CD14-positive monocyte (primary cell): ENCODE measurements at regions of chr9 and their contacts with region 1.

Region 1: GRCh38 chr9:29668732-29669131 is 2095.5 kb upstream of the C9orf72 start:
- DNase-seq: no peak
- H3K4me3 ChIP-seq: no peak overlapping the region
- H3K4me3 Mint-ChIP-seq: no peak overlapping the region
- H3K27ac ChIP-seq: no peak overlapping the region
- H3K27ac Mint-ChIP-seq: no peak overlapping the region
- H3K4me1 ChIP-seq: no peaks in the 10 kb centered on the region
- H3K4me1 Mint-ChIP-seq: no peaks in the 10 kb centered on the region
- H3K27me3 ChIP-seq: no peaks in the 10 kb centered on the region
- H3K27me3 Mint-ChIP-seq: peaks cover 0 to 1% (median 0%) of the 10 kb centered on the region in 3 donors
- CTCF ChIP-seq: no peak

Region 2: DNA sequence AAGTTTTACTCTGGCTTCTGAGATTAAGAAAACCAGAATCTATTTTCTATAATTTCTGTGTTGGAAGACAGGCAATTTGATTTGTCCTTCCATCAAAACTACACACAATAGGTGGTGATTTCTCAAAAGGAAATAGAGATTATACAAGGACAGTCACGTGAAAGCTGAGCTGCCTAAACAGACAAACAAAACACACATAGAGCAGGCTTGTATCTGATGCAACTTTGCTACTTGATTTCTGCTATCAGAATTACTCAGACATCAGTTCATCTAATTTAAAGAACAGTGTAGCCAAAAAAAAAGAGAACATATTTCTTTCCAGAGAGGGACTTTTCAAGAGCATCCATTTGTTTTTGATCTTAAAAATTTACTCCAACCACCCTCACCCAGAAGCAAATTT is 32.8 kb after region 1 on chr9:
- intact Hi-C with region 1: no loop called
- DNase-seq: no peak
- H3K4me3 ChIP-seq: no peak overlapping the region
- H3K4me3 Mint-ChIP-seq: no peak overlapping the region
- H3K27ac ChIP-seq: no peak overlapping the region
- H3K27ac Mint-ChIP-seq: no peak overlapping the region
- H3K4me1 ChIP-seq: no peaks in the 10 kb centered on the region
- H3K4me1 Mint-ChIP-seq: no peaks in the 10 kb centered on the region
- H3K27me3 ChIP-seq: no peaks in the 10 kb centered on the region
- H3K27me3 Mint-ChIP-seq: no peaks in the 10 kb centered on the region
- CTCF ChIP-seq: no peak

Region 3: GRCh38 chr9:29717631-29718030 is 48.9 kb after region 1 on chr9:
- intact Hi-C with region 1: loop called in 1 of 2 experiments (anchors 10 kb)
- DNase-seq: no peak
- H3K4me3 ChIP-seq: no peak overlapping the region
- H3K4me3 Mint-ChIP-seq: no peak overlapping the region
- H3K27ac ChIP-seq: no peak overlapping the region
- H3K27ac Mint-ChIP-seq: no peak overlapping the region
- H3K4me1 ChIP-seq: no peaks in the 10 kb centered on the region
- H3K4me1 Mint-ChIP-seq: no peaks in the 10 kb centered on the region
- H3K27me3 ChIP-seq: no peaks in the 10 kb centered on the region
- H3K27me3 Mint-ChIP-seq: no peaks in the 10 kb centered on the region
- CTCF ChIP-seq: no peak

Region 4: GRCh38 chr9:29730163-29730562 is 61.4 kb after region 1 on chr9:
- intact Hi-C with region 1: loop called in 1 of 2 experiments (anchors 10 kb)
- DNase-seq: no peak
- H3K4me3 ChIP-seq: no peak overlapping the region
- H3K4me3 Mint-ChIP-seq: no peak overlapping the region
- H3K27ac ChIP-seq: no peak overlapping the region
- H3K27ac Mint-ChIP-seq: no peak overlapping the region
- H3K4me1 ChIP-seq: no peaks in the 10 kb centered on the region
- H3K4me1 Mint-ChIP-seq: no peaks in the 10 kb centered on the region
- H3K27me3 ChIP-seq: no peaks in the 10 kb centered on the region
- H3K27me3 Mint-ChIP-seq: peaks cover 0 to 2% (median 2%) of the 10 kb centered on the region in 3 donors
- CTCF ChIP-seq: no peak